Activated CD4-positive, alpha-beta memory T cell treated with anti-CD3 and anti-CD28 coated beads for 36 hours (primary cell): ENCODE measurements at regions of chr1 and their contacts with region 1.

Region 1: DNA sequence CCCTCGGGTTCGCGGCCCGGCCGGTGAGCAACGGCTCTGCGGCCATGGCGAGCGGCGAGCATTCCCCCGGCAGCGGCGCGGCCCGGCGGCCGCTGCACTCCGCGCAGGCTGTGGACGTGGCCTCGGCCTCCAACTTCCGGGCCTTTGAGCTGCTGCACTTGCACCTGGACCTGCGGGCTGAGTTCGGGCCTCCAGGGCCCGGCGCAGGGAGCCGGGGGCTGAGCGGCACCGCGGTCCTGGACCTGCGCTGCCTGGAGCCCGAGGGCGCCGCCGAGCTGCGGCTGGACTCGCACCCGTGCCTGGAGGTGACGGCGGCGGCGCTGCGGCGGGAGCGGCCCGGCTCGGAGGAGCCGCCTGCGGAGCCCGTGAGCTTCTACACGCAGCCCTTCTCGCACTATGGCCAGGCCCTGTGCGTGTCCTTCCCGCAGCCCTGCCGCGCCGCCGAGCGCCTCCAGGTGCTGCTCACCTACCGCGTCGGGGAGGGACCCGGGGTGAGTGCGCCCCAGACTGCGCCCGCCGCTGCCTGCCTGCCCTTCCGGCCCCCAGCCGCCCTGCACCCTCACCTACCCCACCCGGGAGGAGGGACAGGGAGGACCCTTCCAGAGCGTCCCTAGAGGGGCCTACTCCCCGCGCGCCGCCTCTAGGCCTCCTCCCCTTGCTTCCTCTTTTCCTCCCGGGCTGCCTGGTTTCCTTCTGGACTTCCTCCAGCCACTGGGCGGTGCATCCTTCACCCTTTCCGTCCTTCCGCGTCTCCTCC is at the start of gene RNPEP:
- DNase-seq: peak; percentile 67
- H3K4me3 Mint-ChIP-seq: peak within 1 kb of the TSS; percentile 93
- H3K27ac Mint-ChIP-seq: peak within 1 kb of the TSS; percentile 73
- H3K4me1 Mint-ChIP-seq: peaks cover 23% of the 10 kb centered on the region
- H3K27me3 Mint-ChIP-seq: no peaks in the 10 kb centered on the region
- total RNA-seq, gene RNPEP: 48.3 to 50.1 TPM

Region 2: GRCh38 chr1:200654660-200655059 is 1328.1 kb before region 1 on chr1:
- CTCF ChIA-PET with region 1: no interaction called
- POLR2A ChIA-PET with region 1: no interaction called
- intact Hi-C with region 1: no loop called
- DNase-seq: no peak
- H3K4me3 Mint-ChIP-seq: no peak overlapping the region
- H3K27ac Mint-ChIP-seq: no peak overlapping the region
- H3K4me1 Mint-ChIP-seq: peaks cover 26% of the 10 kb centered on the region
- H3K27me3 Mint-ChIP-seq: no peaks in the 10 kb centered on the region

Region 3: DNA sequence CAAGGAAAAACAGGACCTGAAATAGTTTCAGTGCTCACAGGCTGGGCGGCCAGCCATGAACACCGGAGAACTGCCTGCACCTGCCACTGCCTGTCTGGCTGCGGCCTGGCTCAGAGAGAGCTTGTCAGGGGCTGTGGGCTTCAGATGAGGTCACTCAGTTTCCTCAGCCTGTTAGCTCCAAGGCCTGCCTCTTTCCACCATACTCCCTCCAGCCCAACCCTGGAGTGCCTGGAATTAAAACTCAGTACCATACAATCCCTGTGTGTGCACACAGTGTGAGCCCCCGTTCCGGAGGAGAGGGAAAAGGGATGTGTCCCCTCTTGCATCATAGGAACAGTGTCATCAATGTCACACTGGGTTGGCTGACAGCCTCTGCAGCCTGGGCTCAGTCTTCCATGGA is 886.8 kb before region 1 on chr1:
- CTCF ChIA-PET with region 1: no interaction called
- POLR2A ChIA-PET with region 1: no interaction called
- intact Hi-C with region 1: no loop called
- DNase-seq: no peak
- H3K4me3 Mint-ChIP-seq: no peak overlapping the region
- H3K27ac Mint-ChIP-seq: no peak overlapping the region
- H3K4me1 Mint-ChIP-seq: no peaks in the 10 kb centered on the region
- H3K27me3 Mint-ChIP-seq: peaks cover 4% of the 10 kb centered on the region

Region 4: GRCh38 chr1:201828820-201829774 is 153.7 kb before region 1 on chr1 and contains the start of gene IPO9:
- CTCF ChIA-PET with region 1: no interaction called
- POLR2A ChIA-PET with region 1: no interaction called
- intact Hi-C with region 1: loop called (anchors 5 kb)
- DNase-seq: peak; percentile 97
- H3K4me3 Mint-ChIP-seq: peak within 1 kb of the TSS; percentile 99
- H3K27ac Mint-ChIP-seq: peak within 1 kb of the TSS; percentile 94
- H3K4me1 Mint-ChIP-seq: peaks cover 30% of the 10 kb centered on the region
- H3K27me3 Mint-ChIP-seq: no peaks in the 10 kb centered on the region
- total RNA-seq, gene IPO9: 67.6 to 67.9 TPM

Region 5: DNA sequence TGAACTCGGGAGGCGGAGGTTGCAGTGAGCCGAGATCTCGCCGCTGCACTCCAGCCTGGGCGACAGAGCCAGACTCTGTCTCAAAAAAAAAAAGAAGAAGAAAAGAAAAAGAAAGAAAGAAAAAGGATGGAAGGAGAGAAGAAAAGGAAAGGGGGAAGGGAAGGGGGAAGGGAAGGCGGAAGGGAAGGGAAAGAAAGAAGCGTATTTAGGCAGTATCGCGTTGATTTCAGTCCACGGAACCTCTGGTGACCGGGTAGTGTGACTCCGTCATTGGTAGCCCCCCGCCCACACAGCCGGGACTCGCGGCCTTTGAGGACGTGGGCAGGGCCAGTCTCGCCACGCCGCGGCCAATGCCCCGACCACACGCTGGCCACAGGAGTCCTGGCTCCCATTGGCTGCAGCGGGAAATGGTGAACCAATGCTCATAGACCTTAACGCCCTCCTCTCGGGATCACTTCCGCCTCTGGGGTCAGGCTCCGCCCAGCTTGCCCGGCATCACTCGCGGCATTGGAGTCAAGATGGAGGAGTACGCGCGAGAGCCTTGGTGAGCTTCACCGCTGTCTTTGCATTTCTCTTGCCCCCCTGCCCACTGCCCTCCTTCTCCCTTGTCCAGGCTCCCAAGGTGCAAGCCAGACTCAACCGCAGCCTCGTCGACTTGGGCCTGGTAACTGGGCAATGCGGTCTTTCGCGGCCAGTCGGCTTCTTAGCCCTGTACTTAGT is 27.6 kb before region 1 on chr1 and contains the start of gene TIMM17A:
- CTCF ChIA-PET with region 1: no interaction called
- POLR2A ChIA-PET with region 1: interaction called, 8 read pairs
- intact Hi-C with region 1: loop called (anchors 1 kb)
- DNase-seq: peak; percentile 97
- H3K4me3 Mint-ChIP-seq: peak within 1 kb of the TSS; percentile 99
- H3K27ac Mint-ChIP-seq: peak within 1 kb of the TSS; percentile 87
- H3K4me1 Mint-ChIP-seq: peaks cover 20% of the 10 kb centered on the region
- H3K27me3 Mint-ChIP-seq: no peaks in the 10 kb centered on the region
- total RNA-seq, gene TIMM17A: 66.5 to 67.2 TPM

Region 6: DNA sequence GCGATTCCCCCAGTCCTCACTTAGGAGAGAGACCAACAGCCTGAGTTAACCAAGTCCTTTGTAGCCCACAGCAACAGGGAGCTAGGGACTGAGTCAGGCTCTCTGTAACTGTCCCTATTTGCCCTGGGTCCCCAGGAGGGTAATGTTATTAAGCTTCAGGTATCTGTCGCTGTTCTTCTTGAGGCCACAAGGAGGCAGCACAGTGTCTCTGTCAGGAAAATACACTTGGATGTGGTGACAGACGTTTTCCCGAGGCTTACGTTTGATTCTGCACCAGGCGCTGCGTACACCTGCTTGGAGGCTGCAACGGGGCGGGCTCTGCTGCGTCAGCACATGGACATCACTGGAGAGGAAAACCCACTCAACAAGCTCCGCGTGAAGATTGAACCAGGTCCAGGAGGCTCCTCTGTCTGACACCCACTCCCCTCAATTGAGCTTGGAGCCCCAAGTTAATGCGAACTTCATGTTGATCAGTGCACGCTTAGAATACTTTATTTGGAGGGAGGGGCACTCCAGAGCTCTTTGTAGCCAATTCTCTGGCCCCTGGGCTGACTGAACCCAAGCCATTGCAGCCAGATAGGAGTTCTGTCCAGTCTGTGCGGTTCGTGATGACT is 16.9 kb after region 1 on chr1:
- CTCF ChIA-PET with region 1: interaction called, 20 read pairs
- POLR2A ChIA-PET with region 1: no interaction called
- intact Hi-C with region 1: no loop called
- DNase-seq: peak; percentile 30
- H3K4me3 Mint-ChIP-seq: no peak overlapping the region
- H3K27ac Mint-ChIP-seq: no peak overlapping the region
- H3K4me1 Mint-ChIP-seq: no peaks in the 10 kb centered on the region
- H3K27me3 Mint-ChIP-seq: no peaks in the 10 kb centered on the region